ENCODE measurements at regions of chr3 and their contacts with region 1.

Region 1: GRCh38 chr3:183895296-183895695 is 10.6 kb upstream of the PARL start:
- DNase-seq: peak; percentile 48 to 55
- H3K4me3 ChIP-seq: no peak overlapping the region
- H3K27ac ChIP-seq: no peak overlapping the region
- H3K4me1 ChIP-seq: no peaks in the 10 kb centered on the region
- H3K27me3 ChIP-seq: no peaks in the 10 kb centered on the region
- CTCF ChIP-seq: peak; percentile 97

Region 2: DNA sequence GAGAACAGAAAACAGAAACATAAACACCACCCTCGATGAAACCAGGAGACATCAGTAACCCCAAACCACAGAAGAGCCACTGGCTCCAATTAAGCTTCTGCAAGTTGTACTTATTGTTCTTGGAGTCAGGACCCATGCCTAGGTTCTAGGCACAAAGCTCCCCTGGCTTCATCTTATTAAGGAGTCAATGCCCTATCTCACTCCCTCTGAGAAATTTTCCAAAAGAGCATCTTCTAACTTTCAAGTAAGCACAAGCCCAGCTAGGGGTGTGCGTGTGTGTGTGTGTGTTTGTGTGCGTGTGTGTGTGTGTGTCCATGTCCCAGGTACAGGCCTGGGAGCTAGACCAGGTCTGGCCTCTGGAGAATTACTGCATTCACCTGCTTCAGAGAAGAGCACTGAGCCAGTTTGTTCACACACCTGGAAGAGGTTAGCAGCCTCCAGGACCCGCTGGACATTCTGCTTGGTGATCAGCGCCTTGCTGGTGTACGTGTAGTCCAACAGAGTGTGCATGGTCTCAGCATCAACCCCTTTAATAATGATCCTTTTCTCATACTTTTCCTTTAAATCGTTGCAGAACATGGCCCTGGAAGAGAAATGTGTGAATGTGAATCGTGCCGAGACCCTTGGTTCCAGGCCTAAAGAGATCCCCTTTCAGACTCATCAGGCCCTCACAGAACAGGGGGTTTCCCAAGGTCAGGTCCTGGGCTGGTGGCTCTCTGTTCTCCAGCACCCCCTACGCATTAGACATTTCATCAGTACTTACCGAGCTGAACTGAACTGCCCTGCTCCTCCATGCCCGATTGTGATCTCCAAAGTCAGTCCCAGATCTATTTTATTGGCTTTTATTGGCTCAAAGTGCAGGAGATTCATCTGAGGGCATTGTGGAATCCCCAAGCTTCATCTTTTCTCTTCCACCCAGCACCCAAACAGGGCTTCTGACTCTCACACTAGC is 367.6 kb before region 1 on chr3:
- CTCF ChIA-PET with region 1: no interaction called
- POLR2A ChIA-PET with region 1: no interaction called
- intact Hi-C with region 1: no loop called
- DNase-seq: no peak
- H3K4me3 ChIP-seq: no peak overlapping the region
- H3K27ac ChIP-seq: no peak overlapping the region
- H3K4me1 ChIP-seq: no peaks in the 10 kb centered on the region
- H3K27me3 ChIP-seq: no peaks in the 10 kb centered on the region
- CTCF ChIP-seq: no peak

Region 3: GRCh38 chr3:183857863-183858262 is 37.4 kb before region 1 on chr3:
- CTCF ChIA-PET with region 1: interaction called, 12 read pairs
- POLR2A ChIA-PET with region 1: no interaction called
- intact Hi-C with region 1: no loop called
- DNase-seq: no peak
- H3K4me3 ChIP-seq: no peak overlapping the region
- H3K27ac ChIP-seq: no peak overlapping the region
- H3K4me1 ChIP-seq: no peaks in the 10 kb centered on the region
- H3K27me3 ChIP-seq: no peaks in the 10 kb centered on the region
- CTCF ChIP-seq: no peak

Region 4: GRCh38 chr3:184073610-184074009 is 178.3 kb after region 1 on chr3:
- CTCF ChIA-PET with region 1: interaction called, 20 read pairs
- POLR2A ChIA-PET with region 1: no interaction called
- intact Hi-C with region 1: no loop called
- DNase-seq: no peak
- H3K4me3 ChIP-seq: no peak overlapping the region
- H3K27ac ChIP-seq: no peak overlapping the region
- H3K4me1 ChIP-seq: no peaks in the 10 kb centered on the region
- H3K27me3 ChIP-seq: peaks cover 13% of the 10 kb centered on the region; the same call in 1 of the 2 replicates
- CTCF ChIP-seq: no peak

Region 5: DNA sequence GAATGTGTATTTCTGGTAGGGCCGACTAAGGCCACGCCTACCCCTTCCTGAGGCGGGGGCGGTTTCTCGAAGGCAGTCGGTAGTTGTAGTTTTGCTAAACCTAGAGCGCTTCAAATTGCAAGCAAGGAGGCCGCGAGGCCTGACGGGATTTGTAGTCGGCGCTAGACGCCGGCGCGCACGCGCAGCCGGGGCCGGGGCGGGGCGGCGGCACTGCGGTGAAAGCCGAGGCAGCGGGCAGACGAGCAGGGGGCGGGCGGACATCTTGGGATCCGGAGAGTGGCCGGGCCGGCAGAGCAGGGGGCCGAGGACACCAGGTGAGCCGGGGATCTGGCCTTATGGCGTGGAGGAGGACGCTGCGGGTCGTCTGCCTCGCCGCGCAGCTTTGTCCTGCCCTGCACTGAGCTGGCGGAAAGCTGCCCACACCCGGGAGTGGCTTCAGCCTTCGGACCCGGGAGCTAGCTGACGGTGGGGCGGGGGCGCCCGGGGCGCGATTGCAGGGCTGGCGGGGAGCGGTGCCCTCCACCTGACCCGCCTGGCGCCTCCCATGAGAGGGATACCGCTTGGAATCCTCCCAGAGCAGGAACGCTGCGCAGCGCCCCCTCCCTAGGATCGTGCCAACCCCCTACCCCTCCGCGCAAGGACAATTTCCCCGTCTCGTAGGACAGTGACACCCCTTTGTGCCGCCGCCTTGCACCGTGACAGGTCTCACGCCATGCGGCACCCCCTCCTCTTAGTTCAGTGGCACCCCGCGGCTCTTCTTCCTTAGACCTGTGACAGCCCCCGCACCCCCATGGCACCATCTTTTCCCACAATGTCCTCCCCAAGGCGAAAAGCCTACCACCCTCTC is 279.6 kb after region 1 on chr3 and contains the start of gene AP2M1:
- CTCF ChIA-PET with region 1: interaction called, 10 read pairs
- POLR2A ChIA-PET with region 1: no interaction called
- intact Hi-C with region 1: no loop called
- DNase-seq: peak; percentile 99 to 100
- H3K4me3 ChIP-seq: peak within 1 kb of the TSS; percentile 91
- H3K27ac ChIP-seq: peak within 1 kb of the TSS; percentile 32
- H3K4me1 ChIP-seq: peaks cover 20% of the 10 kb centered on the region
- H3K27me3 ChIP-seq: no peaks in the 10 kb centered on the region
- CTCF ChIP-seq: no peak
- total RNA-seq, gene AP2M1: 586 and 606 TPM in 2 replicates

Region 6: GRCh38 chr3:184250167-184250828 is 355.0 kb after region 1 on chr3:
- CTCF ChIA-PET with region 1: interaction called, 11 read pairs
- POLR2A ChIA-PET with region 1: no interaction called
- intact Hi-C with region 1: loop called (anchors 1 kb)
- DNase-seq: peak; percentile 92 to 97
- H3K4me3 ChIP-seq: peak overlapping the region; percentile 96
- H3K27ac ChIP-seq: peak overlapping the region; percentile 90
- H3K4me1 ChIP-seq: peaks cover 18% of the 10 kb centered on the region
- H3K27me3 ChIP-seq: no peaks in the 10 kb centered on the region
- CTCF ChIP-seq: peak; percentile 97

Region 7: GRCh38 chr3:184543843-184544512 is 648.7 kb after region 1 on chr3:
- CTCF ChIA-PET with region 1: no interaction called
- POLR2A ChIA-PET with region 1: no interaction called
- intact Hi-C with region 1: loop called (anchors 1 kb)
- DNase-seq: peak; percentile 83 to 89
- H3K4me3 ChIP-seq: no peak overlapping the region
- H3K27ac ChIP-seq: no peak overlapping the region
- H3K4me1 ChIP-seq: no peaks in the 10 kb centered on the region
- H3K27me3 ChIP-seq: peaks cover 50% of the 10 kb centered on the region
- CTCF ChIP-seq: peak; percentile 97

Measured in PC-9 (cell line).